Transverse colon (tissue), 4 donors: ENCODE measurements at regions of chr7 and their contacts with region 1.

Region 1: DNA sequence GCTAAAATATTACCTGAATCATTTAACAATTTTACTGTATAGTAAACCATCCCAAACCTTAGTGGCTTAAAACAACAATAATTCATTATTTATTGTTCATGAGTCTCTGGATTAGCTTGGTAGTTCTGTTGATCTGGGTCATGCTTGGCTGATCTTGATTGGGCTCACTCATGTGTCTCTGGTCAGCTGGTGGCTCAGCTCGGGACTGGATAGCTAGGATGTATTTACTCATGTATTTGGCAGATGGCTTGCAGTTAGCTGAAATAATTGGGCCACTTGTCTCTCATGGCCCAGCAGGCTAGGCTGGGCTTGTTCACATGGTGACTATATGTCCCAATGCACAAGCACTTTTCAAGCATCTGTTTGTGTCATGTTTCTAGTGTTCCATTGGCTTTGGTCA is 262.8 kb downstream of the BBS9 start:
- DNase-seq: no peak
- H3K4me3 ChIP-seq: no peak overlapping the region
- H3K27ac ChIP-seq: no peak overlapping the region
- H3K4me1 ChIP-seq: no peaks in the 10 kb centered on the region
- H3K27me3 ChIP-seq: no peaks in the 10 kb centered on the region
- CTCF ChIP-seq: no peak
- EP300 ChIP-seq: no peak
- POLR2A ChIP-seq: no peak

Region 2: GRCh38 chr7:33410266-33410665 is 18.1 kb after region 1 on chr7:
- in situ Hi-C with region 1: no loop called
- intact Hi-C with region 1: loop called (anchors 1 kb)
- DNase-seq: no peak
- H3K4me3 ChIP-seq: no peak overlapping the region
- H3K27ac ChIP-seq: no peak overlapping the region
- H3K4me1 ChIP-seq: no peaks in the 10 kb centered on the region
- H3K27me3 ChIP-seq: no peaks in the 10 kb centered on the region
- CTCF ChIP-seq: no peak
- EP300 ChIP-seq: no peak
- POLR2A ChIP-seq: no peak